Mammary epithelial cell (primary cell): ENCODE measurements at regions of chr11 and their contacts with region 1.

Region 1: GRCh38 chr11:78961247-78961646 is 386.6 kb upstream of the NARS2 start:
- DNase-seq: peak; percentile 60
- H3K4me3 ChIP-seq: no peak overlapping the region
- H3K27ac ChIP-seq: no peak overlapping the region
- H3K4me1 ChIP-seq: peaks cover 20% of the 10 kb centered on the region
- H3K27me3 ChIP-seq: no peaks in the 10 kb centered on the region
- CTCF ChIP-seq: peak; percentile 88 to 90

Region 2: GRCh38 chr11:78715639-78716311 is 245.5 kb before region 1 on chr11:
- CTCF ChIA-PET with region 1: interaction called, 4 read pairs
- dilution Hi-C with region 1: no loop called
- in situ Hi-C with region 1: no loop called
- intact Hi-C with region 1: loop called (anchors 1 kb)
- DNase-seq: peak; percentile 95
- H3K4me3 ChIP-seq: no peak overlapping the region
- H3K27ac ChIP-seq: peak overlapping the region; percentile 41
- H3K4me1 ChIP-seq: peaks cover 24% of the 10 kb centered on the region
- H3K27me3 ChIP-seq: no peaks in the 10 kb centered on the region
- CTCF ChIP-seq: peak; percentile 72 to 87

Region 3: DNA sequence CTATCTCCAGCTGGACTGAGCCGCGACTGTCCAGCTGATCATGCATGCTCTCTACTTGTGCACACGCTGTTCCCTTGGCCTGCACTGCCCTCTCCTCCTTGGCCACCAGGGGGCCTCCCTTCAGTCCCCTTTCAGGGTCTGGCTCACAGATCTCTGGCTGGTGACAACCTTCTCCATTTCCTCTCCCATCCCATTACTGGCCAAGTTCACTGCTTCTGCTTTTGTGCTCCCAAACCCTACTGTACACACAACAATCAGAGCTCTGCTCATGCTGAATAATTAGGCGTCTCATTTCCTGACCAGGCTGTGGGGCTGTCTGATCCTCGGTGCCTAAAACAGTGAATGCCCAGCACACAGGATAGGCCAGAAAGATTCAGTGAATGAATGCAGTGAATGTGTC is 162.6 kb before region 1 on chr11:
- CTCF ChIA-PET with region 1: interaction called, 3 read pairs
- dilution Hi-C with region 1: no loop called
- in situ Hi-C with region 1: loop called in 1 of 2 experiments (anchors 25 kb)
- intact Hi-C with region 1: loop called (anchors 1 kb)
- DNase-seq: peak; percentile 11
- H3K4me3 ChIP-seq: no peak overlapping the region
- H3K27ac ChIP-seq: no peak overlapping the region
- H3K4me1 ChIP-seq: peaks cover 19% of the 10 kb centered on the region
- H3K27me3 ChIP-seq: no peaks in the 10 kb centered on the region
- CTCF ChIP-seq: peak; percentile 81 to 83

Region 4: GRCh38 chr11:78838417-78838816 is 122.8 kb before region 1 on chr11:
- CTCF ChIA-PET with region 1: no interaction called
- dilution Hi-C with region 1: no loop called
- in situ Hi-C with region 1: no loop called
- intact Hi-C with region 1: loop called (anchors 2 kb)
- DNase-seq: no peak
- H3K4me3 ChIP-seq: no peak overlapping the region
- H3K27ac ChIP-seq: no peak overlapping the region
- H3K4me1 ChIP-seq: no peaks in the 10 kb centered on the region
- H3K27me3 ChIP-seq: no peaks in the 10 kb centered on the region
- CTCF ChIP-seq: peak in 1 of 2 donors; percentile 47

Region 5: GRCh38 chr11:79100093-79100910 is 139.1 kb after region 1 on chr11:
- CTCF ChIA-PET with region 1: no interaction called
- dilution Hi-C with region 1: no loop called
- in situ Hi-C with region 1: no loop called
- intact Hi-C with region 1: loop called (anchors 5 kb)
- DNase-seq: peak; percentile 26
- H3K4me3 ChIP-seq: no peak overlapping the region
- H3K27ac ChIP-seq: no peak overlapping the region
- H3K4me1 ChIP-seq: no peaks in the 10 kb centered on the region
- H3K27me3 ChIP-seq: no peaks in the 10 kb centered on the region
- CTCF ChIP-seq: peak; percentile 74 to 87